Esophagus muscularis mucosa (tissue), 4 donors: ENCODE measurements at regions of chr12 and their contacts with region 1.

Region 1: GRCh38 chr12:9064815-9065606 is 50.7 kb downstream of the A2M start:
- DNase-seq: peak; percentile 94
- H3K4me3 ChIP-seq: peak overlapping the region; percentile 73 to 94 (median 86)
- H3K27ac ChIP-seq: peak overlapping the region; percentile 94 to 99 (median 98)
- H3K4me1 ChIP-seq: peaks cover 12 to 28% (median 22%) of the 10 kb centered on the region in 4 donors
- H3K27me3 ChIP-seq: no peaks in the 10 kb centered on the region
- CTCF ChIP-seq: peak in 1 of 3 experiments; percentile 5
- EP300 ChIP-seq: no peak
- POLR2A ChIP-seq: peak; percentile 86

Region 2: GRCh38 chr12:9106610-9107541 is 41.9 kb after region 1 on chr12:
- intact Hi-C with region 1: loop called (anchors 5 kb)
- DNase-seq: no peak
- H3K4me3 ChIP-seq: no peak overlapping the region
- H3K27ac ChIP-seq: no peak overlapping the region
- H3K4me1 ChIP-seq: peaks cover 5 to 9% (median 8%) of the 10 kb centered on the region in 4 donors
- H3K27me3 ChIP-seq: no peaks in the 10 kb centered on the region
- CTCF ChIP-seq: no peak
- EP300 ChIP-seq: no peak
- POLR2A ChIP-seq: no peak

Region 3: DNA sequence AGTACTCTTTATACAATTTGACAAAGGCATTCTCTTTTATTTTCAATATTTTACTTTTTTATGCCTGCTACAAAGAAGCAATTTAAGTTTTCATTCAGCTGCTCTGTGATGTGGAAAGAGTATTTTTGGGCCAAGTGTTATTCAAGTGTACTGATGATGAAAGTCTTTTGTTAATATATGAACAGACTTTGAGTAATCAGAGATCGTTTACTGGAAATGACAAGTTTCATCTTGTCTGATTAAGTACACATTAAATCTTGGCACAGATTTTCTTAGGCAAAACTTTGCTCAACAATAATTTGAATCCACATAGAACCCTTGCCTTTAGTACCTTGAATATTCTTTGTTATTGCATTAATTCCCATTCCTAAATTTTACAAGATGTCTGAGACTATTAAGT is 156.5 kb after region 1 on chr12:
- intact Hi-C with region 1: no loop called
- DNase-seq: no peak
- H3K4me3 ChIP-seq: no peak overlapping the region
- H3K27ac ChIP-seq: peak overlapping the region in 2 of 4 donors; percentile 31 to 54
- H3K4me1 ChIP-seq: peaks cover 0 to 15% (median 7%) of the 10 kb centered on the region in 4 donors
- H3K27me3 ChIP-seq: no peaks in the 10 kb centered on the region
- CTCF ChIP-seq: no peak
- EP300 ChIP-seq: no peak
- POLR2A ChIP-seq: no peak